Activated CD4-positive, alpha-beta memory T cell treated with anti-CD3 and anti-CD28 coated beads for 36 hours (primary cell): ENCODE measurements at regions of chr17 and their contacts with region 1.

Region 1: DNA sequence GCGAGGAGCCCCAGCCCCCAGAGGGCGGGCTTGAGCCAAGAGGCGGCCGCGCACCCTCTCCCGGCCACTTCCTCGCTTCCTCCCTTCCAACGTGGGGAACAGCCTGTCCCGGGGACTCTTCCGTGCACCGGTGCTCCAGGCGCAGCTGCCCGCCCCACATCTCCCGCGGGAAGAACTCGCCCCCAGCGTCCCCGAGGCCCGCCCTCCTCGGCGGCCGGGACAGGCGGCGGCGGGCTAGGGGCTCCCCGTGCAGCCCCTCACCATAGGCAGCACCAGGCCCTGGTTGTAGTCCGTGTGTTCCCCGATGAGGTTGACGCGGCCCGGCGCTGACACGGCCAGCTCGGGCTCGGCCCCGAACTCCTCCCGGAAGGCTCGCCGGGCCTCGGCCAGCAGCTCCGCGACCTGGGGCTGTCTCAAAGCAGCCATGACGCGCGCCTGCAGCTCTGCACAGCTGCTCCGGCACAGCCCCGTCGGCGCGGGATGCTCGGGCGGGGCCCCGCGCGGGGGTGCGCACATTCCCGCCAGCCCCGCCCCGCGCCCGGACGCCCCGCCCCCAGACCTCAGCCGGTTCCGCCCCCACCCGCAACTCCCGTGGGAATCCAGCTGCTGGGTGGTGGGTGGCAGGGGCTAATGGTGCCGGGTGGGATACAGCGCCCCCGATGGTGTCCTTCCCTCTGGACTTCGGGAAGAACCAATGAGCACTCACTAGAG is at the start of gene GALK1:
- DNase-seq: peak; percentile 83
- H3K4me3 Mint-ChIP-seq: peak within 1 kb of the TSS; percentile 79
- H3K27ac Mint-ChIP-seq: peak within 1 kb of the TSS; percentile 71
- H3K4me1 Mint-ChIP-seq: peaks cover 11% of the 10 kb centered on the region
- H3K27me3 Mint-ChIP-seq: no peaks in the 10 kb centered on the region
- total RNA-seq, gene GALK1: 69.3 to 69.7 TPM

Region 2: DNA sequence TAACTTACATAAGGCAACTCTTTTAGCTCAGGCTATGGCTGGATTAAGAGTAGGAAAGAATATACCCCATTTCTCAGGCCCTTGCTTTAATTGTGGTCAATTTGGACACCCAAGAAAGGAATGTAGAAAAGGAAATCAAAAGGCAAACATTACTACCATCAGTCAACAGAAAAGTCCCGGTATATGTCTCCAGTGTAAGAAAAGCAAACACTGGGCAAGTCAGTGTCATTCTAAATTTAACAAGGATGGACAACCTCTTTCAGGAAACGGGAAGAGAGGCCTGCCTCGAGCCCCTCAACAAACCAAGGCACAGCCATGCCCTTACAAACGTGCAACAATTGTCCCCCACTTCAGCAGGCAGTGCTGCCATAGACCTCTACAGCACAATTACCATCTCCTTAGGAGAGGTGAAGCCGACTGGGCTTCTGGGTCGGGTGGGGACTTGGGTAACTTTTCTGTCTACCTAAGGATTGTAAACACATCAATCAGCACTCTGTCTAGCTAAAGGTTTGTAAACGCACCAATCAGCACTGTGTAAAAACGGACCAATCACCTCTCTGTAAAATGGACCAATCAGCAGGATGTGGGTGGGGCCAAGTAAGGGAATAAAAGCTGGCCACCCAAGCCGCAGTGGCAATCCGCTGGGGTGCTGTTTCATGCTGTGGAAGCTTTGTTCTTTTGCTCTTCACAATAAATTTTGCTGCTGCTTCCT is 740.0 kb before region 1 on chr17:
- CTCF ChIA-PET with region 1: no interaction called
- POLR2A ChIA-PET with region 1: no interaction called
- intact Hi-C with region 1: no loop called
- DNase-seq: peak; percentile 58
- H3K4me3 Mint-ChIP-seq: peak overlapping the region; percentile 20
- H3K27ac Mint-ChIP-seq: no peak overlapping the region
- H3K4me1 Mint-ChIP-seq: peaks cover 12% of the 10 kb centered on the region
- H3K27me3 Mint-ChIP-seq: no peaks in the 10 kb centered on the region

Region 3: DNA sequence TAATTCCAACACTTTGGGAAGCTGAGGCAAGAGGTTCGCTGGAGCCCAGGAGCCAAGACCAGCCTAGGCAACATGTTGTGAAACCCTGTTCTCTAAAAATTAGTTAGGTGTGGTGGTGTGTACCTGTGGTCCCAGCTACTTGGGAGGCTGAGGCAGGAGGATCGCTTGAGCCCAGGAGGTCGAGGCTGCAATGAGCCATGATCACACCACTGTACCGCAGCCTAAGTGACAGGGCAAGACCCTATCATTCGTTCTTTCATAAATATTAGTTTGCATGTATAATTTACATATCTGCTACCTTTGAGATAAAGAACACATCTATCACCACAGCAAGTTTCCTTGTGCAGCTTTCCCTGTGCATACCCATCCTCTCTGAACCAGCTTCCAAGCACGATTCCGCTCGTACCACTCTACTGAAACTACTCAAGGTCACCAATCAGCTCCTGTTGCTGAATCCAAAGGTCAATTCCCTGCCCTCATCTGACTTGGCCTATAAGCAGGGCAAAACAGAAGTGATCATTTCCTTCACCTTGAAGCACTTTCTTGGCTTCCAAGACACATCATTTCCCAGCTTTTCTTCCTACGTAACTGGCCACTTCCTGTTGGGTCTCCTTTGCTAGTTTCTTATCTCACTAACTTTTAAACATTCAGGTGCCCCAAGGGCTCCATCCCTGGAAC is 408.5 kb before region 1 on chr17:
- CTCF ChIA-PET with region 1: no interaction called
- POLR2A ChIA-PET with region 1: no interaction called
- intact Hi-C with region 1: no loop called
- DNase-seq: no peak
- H3K4me3 Mint-ChIP-seq: no peak overlapping the region
- H3K27ac Mint-ChIP-seq: peak overlapping the region; percentile 1
- H3K4me1 Mint-ChIP-seq: peaks cover 52% of the 10 kb centered on the region
- H3K27me3 Mint-ChIP-seq: no peaks in the 10 kb centered on the region

Region 4: DNA sequence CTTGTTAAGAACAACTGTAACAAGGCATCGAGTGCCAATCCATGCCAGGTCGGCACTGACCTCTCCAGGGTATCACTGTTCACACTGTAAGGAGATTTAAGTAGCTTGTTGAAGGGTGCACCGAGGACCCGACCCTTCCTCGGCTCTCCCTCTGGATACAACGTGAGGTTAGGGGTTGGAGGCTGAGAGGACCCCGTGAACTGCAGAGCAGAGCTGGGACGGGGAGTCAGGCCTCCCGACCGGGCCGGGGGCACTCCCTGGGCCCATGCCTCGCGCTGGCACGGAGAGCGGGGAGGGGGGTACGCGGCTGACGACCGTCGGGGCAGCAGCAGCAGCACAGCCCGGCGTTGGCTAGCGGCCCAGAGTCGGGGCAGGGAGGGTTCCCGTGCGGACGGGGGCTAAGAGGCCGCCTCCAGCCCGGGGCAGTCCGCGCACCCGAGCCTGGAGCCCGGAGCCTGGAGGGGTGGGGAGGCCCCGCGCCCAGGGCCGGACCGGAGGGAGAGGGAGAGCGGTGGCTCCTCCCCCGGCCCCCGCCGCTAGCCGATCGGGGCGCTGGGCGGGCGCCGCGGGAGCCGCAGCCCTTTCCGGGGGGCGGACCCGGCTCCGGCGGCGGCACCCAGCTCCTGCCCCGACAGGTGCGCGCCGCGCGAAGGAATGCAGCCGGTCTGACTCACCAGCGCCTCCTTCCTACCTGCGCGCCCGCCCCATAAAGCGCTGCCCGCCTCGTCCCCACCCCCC is 44.0 kb before region 1 on chr17 and contains the start of gene ITGB4:
- CTCF ChIA-PET with region 1: no interaction called
- POLR2A ChIA-PET with region 1: no interaction called
- intact Hi-C with region 1: no loop called
- DNase-seq: peak; percentile 64
- H3K4me3 Mint-ChIP-seq: peak within 1 kb of the TSS; percentile 69
- H3K27ac Mint-ChIP-seq: no peak within 1 kb of the TSS
- H3K4me1 Mint-ChIP-seq: peaks cover 3% of the 10 kb centered on the region
- H3K27me3 Mint-ChIP-seq: peaks cover 11% of the 10 kb centered on the region
- total RNA-seq, gene ITGB4: 0.67 to 1.1 TPM

Region 5: DNA sequence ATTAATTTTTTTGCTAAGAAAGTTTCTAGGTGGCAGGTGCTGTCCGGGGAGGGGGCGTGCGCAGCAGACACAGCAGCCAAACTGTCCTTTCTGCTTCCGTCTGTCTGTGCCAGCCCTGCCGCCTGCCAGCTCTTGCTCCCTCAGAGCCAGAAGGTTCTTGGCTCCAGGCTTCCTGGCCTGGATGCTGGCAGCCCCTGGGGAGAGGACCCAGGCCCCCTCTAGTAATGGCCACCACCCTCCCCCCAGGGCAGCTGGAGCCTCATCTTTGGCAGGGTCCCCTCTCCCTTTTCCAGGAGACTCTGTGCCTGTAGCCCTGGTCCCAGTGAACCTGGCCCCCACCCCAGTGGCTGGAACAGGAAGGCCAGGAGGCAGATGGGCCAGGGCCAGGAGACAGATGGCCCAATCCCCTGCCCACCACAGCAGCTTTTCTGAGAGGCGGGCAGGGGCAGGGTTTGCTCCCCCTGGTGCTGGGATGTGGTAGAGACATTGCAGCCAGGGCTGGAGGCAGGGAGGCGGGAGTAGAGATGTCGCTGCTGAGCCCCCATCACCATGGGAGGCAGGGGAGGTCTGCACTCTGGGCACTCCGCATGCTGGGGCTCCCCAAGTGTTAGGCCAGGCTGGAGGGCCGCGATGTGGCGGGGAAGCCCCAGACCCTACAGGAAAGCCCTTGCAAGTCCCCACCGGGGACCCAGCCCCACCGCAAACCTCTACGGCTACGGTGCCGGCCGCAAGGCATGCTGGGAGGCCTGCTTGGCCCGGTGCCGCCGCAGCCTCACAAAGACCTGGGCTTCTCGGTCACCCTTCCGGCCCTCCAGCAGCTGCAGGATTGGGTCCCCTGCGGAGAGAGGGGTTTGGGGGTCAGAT is 62.6 kb after region 1 on chr17:
- CTCF ChIA-PET with region 1: interaction called, 61 read pairs
- POLR2A ChIA-PET with region 1: interaction called, 4 read pairs
- intact Hi-C with region 1: loop called (anchors 2 kb)
- DNase-seq: peak; percentile 79
- H3K4me3 Mint-ChIP-seq: peak overlapping the region; percentile 46
- H3K27ac Mint-ChIP-seq: peak overlapping the region; percentile 87
- H3K4me1 Mint-ChIP-seq: peaks cover 15% of the 10 kb centered on the region
- H3K27me3 Mint-ChIP-seq: no peaks in the 10 kb centered on the region